Activated CD4-positive, alpha-beta T cell treated with anti-CD3 and anti-CD28 coated beads for 36 hours (primary cell): ENCODE measurements at regions of chr3 and their contacts with region 1.

Region 1: DNA sequence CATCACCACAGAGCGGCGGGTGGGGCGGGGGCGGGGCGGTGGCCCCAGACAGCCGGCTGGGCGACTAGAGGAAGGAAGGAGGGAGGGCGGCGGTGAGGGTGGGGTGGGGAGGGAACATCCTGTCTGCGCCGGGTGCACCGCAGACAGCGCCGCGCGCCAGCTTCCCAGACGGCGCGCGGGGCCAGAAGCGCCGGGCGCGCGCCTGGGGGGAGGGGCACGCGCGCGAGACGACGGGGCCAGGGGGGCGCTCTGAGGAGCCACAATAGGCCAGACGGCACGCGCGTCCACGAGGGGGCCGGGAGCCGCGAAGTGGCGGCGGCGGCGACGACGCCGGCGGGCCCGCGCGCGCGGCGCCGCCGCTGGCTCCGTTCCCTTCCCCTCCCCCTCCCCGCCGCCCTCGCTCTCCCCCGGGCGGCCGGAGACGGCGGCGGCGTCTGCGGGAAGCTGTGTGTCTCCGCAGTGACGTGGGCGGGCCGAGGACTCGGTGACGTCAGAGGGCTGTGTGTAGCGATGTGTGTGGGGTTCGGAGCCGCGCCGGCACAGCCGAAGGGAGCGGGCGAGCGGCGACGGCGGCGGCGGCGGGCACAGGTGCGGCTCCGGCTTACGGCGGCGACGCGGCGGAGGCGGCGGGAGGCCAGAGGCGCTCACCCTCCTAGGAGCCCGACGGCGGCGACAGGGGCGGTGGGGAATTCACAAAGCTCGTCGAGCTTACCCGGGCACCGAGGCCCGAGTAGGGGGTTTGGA is at the start of gene SKIL:
- DNase-seq: peak; percentile 97
- ATAC-seq: peak; percentile 77
- H3K4me3 Mint-ChIP-seq: peak within 1 kb of the TSS; percentile 78
- H3K27ac Mint-ChIP-seq: peak within 1 kb of the TSS; percentile 96
- H3K4me1 Mint-ChIP-seq: peaks cover 38% of the 10 kb centered on the region
- H3K27me3 Mint-ChIP-seq: no peaks in the 10 kb centered on the region
- total RNA-seq, gene SKIL: 15.6 to 20.3 TPM

Region 2: GRCh38 chr3:169812332-169813235 is 544.8 kb before region 1 on chr3 and contains the starts of genes LRRC34 and LRRIQ4:
- CTCF ChIA-PET with region 1: no interaction called
- POLR2A ChIA-PET with region 1: no interaction called
- intact Hi-C with region 1: loop called in 1 of 2 experiments (anchors 1 kb)
- DNase-seq: peak; percentile 90
- ATAC-seq: peak; percentile 77
- H3K4me3 Mint-ChIP-seq: peak within 1 kb of the TSS; percentile 77
- H3K27ac Mint-ChIP-seq: peak within 1 kb of the TSS; percentile 82
- H3K4me1 Mint-ChIP-seq: peaks cover 27% of the 10 kb centered on the region
- H3K27me3 Mint-ChIP-seq: peaks cover 2% of the 10 kb centered on the region
- total RNA-seq, gene LRRC34: 3.8 TPM
- total RNA-seq, gene LRRIQ4: 0.09 to 0.12 TPM

Region 3: GRCh38 chr3:169907463-169907862 is 449.9 kb before region 1 on chr3:
- CTCF ChIA-PET with region 1: no interaction called
- POLR2A ChIA-PET with region 1: no interaction called
- intact Hi-C with region 1: no loop called
- DNase-seq: no peak
- ATAC-seq: no peak
- H3K4me3 Mint-ChIP-seq: no peak overlapping the region
- H3K27ac Mint-ChIP-seq: no peak overlapping the region
- H3K4me1 Mint-ChIP-seq: no peaks in the 10 kb centered on the region
- H3K27me3 Mint-ChIP-seq: peaks cover 2% of the 10 kb centered on the region

Region 4: GRCh38 chr3:170055209-170055608 is 302.1 kb before region 1 on chr3:
- CTCF ChIA-PET with region 1: no interaction called
- POLR2A ChIA-PET with region 1: no interaction called
- intact Hi-C with region 1: loop called in 1 of 2 experiments (anchors 2 kb)
- DNase-seq: peak; percentile 45
- ATAC-seq: peak; percentile 70
- H3K4me3 Mint-ChIP-seq: no peak overlapping the region
- H3K27ac Mint-ChIP-seq: no peak overlapping the region
- H3K4me1 Mint-ChIP-seq: peaks cover 41% of the 10 kb centered on the region
- H3K27me3 Mint-ChIP-seq: no peaks in the 10 kb centered on the region

Region 5: DNA sequence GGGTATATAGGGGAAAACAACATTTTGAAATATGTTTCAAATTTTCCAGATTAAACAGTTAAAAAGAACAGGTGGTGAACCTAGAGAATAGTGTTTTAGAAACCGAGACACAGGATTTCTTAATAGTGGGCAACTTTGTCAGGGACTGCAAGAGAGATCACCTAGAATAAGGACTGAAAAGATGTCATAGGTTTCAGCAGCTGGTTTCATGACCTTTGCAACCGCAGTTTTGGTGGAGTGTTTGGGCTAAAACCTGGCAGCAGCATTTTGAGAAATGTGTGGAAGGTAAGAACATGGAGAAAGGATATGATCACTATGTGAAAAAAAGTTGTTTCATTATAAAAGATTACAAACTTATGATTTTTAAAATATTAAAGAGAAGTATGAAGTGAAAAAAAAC is 100.2 kb before region 1 on chr3:
- CTCF ChIA-PET with region 1: no interaction called
- POLR2A ChIA-PET with region 1: interaction called, 4 read pairs
- intact Hi-C with region 1: loop called (anchors 1 to 5 kb)
- DNase-seq: peak; percentile 59
- ATAC-seq: peak; percentile 66
- H3K4me3 Mint-ChIP-seq: no peak overlapping the region
- H3K27ac Mint-ChIP-seq: peak overlapping the region; percentile 58
- H3K4me1 Mint-ChIP-seq: peaks cover 43% of the 10 kb centered on the region
- H3K27me3 Mint-ChIP-seq: no peaks in the 10 kb centered on the region

Region 6: GRCh38 chr3:170321321-170322034 is 35.9 kb before region 1 on chr3:
- CTCF ChIA-PET with region 1: no interaction called
- POLR2A ChIA-PET with region 1: no interaction called
- intact Hi-C with region 1: no loop called
- DNase-seq: no peak
- ATAC-seq: no peak
- H3K4me3 Mint-ChIP-seq: no peak overlapping the region
- H3K27ac Mint-ChIP-seq: no peak overlapping the region
- H3K4me1 Mint-ChIP-seq: no peaks in the 10 kb centered on the region
- H3K27me3 Mint-ChIP-seq: no peaks in the 10 kb centered on the region

Region 7: DNA sequence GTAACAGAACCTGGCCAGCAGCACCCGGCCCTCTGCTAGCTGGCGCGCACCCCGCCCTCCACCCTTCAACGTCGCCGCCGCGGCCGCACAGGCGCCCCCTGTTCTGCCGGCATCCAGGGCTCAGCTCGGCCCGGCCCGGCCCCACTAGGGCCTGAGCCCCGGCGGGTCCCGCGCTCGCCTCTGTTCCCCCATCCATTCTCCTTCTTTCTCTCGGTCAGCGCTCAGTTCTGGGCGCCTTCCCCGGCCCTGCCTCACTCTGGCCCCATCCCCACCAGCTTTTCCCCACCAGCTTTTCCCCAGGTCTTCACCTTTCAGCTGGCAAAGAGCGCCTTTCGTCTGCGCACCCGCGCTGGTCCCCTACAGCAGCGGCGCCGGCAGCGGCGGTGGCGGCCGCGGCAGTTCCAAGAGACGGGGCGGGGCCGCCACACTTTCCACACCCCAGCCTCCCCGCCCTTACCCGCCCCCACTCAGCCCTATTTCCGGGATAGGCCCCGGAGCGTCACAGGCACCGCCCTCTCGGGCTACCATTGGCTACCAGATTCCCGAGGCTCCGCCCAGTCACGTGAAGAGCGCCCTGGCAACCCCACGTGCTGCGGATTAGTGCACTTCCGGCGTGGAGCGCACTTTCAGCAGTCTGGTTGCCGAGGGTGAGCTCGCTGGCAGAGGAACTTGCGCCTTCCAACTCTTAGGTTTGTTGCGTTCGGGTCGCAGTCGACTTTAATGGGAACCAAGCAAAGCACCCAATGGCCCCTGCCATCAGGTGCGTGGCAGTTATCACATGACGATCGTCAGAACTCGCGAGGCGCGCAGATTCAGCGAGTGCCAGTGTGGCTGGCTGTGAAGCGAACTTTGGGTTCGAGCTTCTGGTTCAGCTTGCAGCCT is 551.1 kb after region 1 on chr3 and contains the start of gene EIF5A2:
- CTCF ChIA-PET with region 1: no interaction called
- POLR2A ChIA-PET with region 1: no interaction called
- intact Hi-C with region 1: loop called in 1 of 2 experiments (anchors 1 kb)
- DNase-seq: peak; percentile 98
- ATAC-seq: peak; percentile 98
- H3K4me3 Mint-ChIP-seq: peak within 1 kb of the TSS; percentile 75
- H3K27ac Mint-ChIP-seq: peak within 1 kb of the TSS; percentile 91
- H3K4me1 Mint-ChIP-seq: peaks cover 16% of the 10 kb centered on the region
- H3K27me3 Mint-ChIP-seq: no peaks in the 10 kb centered on the region
- total RNA-seq, gene EIF5A2: 4.7 to 5.7 TPM